ENCODE measurements at regions of chr9 and their contacts with region 1.

Region 1: GRCh38 chr9:95127249-95128176 is 190.0 kb downstream of the FANCC start:
- DNase-seq: peak; percentile 22
- H3K4me3 ChIP-seq: peak overlapping the region; percentile 16 to 55 (median 42)
- H3K27ac ChIP-seq: peak overlapping the region; percentile 29 to 85 (median 70)
- H3K4me1 ChIP-seq: peaks cover 10 to 93% (median 35%) of the 10 kb centered on the region in 3 donors
- H3K27me3 ChIP-seq: no peaks in the 10 kb centered on the region
- CTCF ChIP-seq: peak; percentile 89 to 97 (median 94)
- POLR2A ChIP-seq: no peak

Region 2: GRCh38 chr9:94675008-94675881 is 452.3 kb before region 1 on chr9:
- intact Hi-C with region 1: loop called (anchors 5 kb)
- DNase-seq: no peak
- H3K4me3 ChIP-seq: no peak overlapping the region
- H3K27ac ChIP-seq: peak overlapping the region in 3 of 4 donors; percentile 41 to 57 (median 43)
- H3K4me1 ChIP-seq: peaks cover 3 to 25% (median 10%) of the 10 kb centered on the region in 3 donors
- H3K27me3 ChIP-seq: no peaks in the 10 kb centered on the region
- CTCF ChIP-seq: no peak
- POLR2A ChIP-seq: no peak

Region 3: DNA sequence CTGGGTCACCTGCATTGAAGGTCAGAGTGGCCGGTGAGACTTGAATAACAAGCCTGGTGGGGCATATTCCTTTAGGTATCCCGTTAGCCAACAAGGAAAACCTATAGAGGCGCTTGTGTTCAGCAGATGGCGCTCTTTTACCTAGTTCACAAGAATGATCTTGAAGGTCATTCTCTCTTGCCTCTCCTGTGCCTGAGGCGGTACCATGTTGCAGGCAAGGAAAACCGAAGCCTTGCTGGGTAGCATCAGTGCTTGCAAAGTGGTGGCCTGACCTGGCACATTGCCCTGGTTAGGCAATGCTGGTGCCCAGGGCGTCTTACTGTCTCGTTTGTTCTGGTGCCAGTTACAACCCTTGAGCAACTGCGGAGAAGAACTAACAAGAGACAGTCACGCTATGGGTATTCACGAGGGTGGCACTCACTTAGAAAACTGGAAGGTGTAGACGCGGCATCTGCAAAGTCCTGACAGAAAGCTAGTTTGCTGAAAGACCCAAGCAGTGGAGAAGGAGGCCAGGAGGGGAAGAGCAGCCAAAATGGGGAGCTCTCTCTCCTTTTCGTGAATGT is 344.3 kb before region 1 on chr9:
- intact Hi-C with region 1: loop called (anchors 5 kb)
- DNase-seq: peak; percentile 23
- H3K4me3 ChIP-seq: no peak overlapping the region
- H3K27ac ChIP-seq: peak overlapping the region; percentile 45 to 75 (median 56)
- H3K4me1 ChIP-seq: peaks cover 0 to 45% (median 10%) of the 10 kb centered on the region in 3 donors
- H3K27me3 ChIP-seq: no peaks in the 10 kb centered on the region
- CTCF ChIP-seq: peak; percentile 33 to 88 (median 77)
- POLR2A ChIP-seq: peak in 1 of 4 donors; percentile 17

Region 4: GRCh38 chr9:94973451-94973941 is 154.0 kb before region 1 on chr9:
- intact Hi-C with region 1: no loop called
- DNase-seq: no peak
- H3K4me3 ChIP-seq: no peak overlapping the region
- H3K27ac ChIP-seq: peak overlapping the region in 2 of 4 donors; percentile 28 to 55
- H3K4me1 ChIP-seq: peaks cover 0 to 13% (median 12%) of the 10 kb centered on the region in 3 donors
- H3K27me3 ChIP-seq: no peaks in the 10 kb centered on the region
- CTCF ChIP-seq: no peak
- POLR2A ChIP-seq: no peak